Activated T-helper 1 cell treated with anti-CD3 and anti-CD28 coated beads, Interleukin-12 subunit alpha, Interleukin-12 subunit beta, Interleukin-2, Interleukin-4 antibody, amounts not matched to agents 30 ng/mL and 10 ng/mL and 1 ng/mL, durations not matched to agents 14 hours and 24 hours and 36 hours (primary cell): ENCODE measurements at regions of chr15 and their contacts with region 1.

Region 1: GRCh38 chr15:58182460-58183163 is 44.4 kb downstream of the AQP9 start:
- DNase-seq: no peak
- H3K4me3 Mint-ChIP-seq: no peak overlapping the region
- H3K27ac Mint-ChIP-seq: no peak overlapping the region
- H3K4me1 Mint-ChIP-seq: peaks cover 11% of the 10 kb centered on the region
- H3K27me3 Mint-ChIP-seq: peaks cover 24% of the 10 kb centered on the region

Region 2: DNA sequence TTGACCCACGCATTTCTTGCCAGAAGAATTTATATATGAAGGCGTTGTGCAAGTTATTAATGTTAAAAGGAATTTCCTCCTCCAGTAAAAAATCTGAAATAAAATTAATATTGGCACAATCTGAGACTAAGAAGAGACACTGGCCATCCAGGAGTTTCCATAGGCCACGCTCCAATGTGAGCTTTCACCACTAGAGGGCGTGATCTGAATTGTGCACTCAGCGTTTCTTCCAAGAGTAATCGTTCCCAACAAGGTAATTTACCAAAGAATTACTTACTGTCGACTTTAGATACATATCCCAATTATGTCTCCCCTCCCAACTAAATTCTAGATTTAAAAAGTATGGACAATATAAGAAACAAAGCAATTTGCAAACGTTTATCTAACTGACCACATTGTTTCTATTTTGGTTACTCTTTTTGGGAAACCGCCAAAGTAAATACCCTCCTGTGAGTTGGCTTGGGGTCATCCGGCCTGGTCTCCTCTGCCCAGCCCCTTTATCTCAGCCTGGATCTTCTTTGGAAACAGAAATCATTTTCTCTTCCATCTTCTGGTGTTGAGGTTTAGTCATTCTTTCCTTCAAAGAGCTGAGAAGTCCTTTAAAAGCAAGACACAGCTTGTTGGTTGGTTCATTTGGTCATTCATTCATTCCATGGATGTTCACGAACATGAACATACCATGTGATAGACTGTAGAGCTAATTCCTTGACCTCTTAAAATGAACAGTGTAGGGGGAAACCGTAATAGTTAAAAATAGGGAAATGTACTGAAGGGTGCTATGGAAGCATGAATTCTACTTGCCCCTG is 449.9 kb before region 1 on chr15:
- intact Hi-C with region 1: loop called (anchors 5 kb)
- DNase-seq: peak; percentile 26
- H3K4me3 Mint-ChIP-seq: no peak overlapping the region
- H3K27ac Mint-ChIP-seq: no peak overlapping the region
- H3K4me1 Mint-ChIP-seq: peaks cover 10% of the 10 kb centered on the region
- H3K27me3 Mint-ChIP-seq: peaks cover 8% of the 10 kb centered on the region

Region 3: DNA sequence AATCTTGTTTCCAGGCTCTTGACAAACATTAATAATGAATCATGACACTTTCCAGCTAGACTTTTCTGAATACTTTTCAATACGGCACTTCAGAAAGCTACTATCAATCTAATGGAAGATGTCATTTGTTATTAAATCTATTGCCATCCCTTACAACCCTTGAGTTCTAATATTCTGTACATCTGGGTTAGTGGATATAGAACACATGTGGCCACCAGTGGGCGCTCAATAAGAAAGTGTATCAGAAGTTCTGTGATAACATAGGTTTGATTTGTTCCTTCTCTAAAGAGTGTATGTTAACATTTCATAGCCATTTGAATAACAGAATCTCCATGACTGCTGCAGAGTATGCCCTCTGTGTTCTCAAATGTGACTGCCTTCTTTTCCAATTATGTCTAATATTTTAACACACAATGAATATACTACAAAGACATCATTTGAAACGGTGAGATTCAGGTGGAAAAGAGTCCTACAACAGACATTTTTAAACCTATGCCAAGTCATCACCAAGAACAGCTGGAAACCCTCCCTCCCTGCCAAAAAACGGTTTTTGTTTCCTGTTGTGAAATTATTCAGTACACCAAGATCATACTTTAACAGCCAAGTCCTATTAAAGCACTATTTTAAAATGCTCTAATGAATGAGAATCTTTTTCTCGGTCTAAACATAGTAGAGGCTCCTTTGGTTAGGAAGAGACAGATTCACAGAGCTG is 139.3 kb before region 1 on chr15:
- intact Hi-C with region 1: loop called (anchors 1 kb)
- DNase-seq: no peak
- H3K4me3 Mint-ChIP-seq: no peak overlapping the region
- H3K27ac Mint-ChIP-seq: no peak overlapping the region
- H3K4me1 Mint-ChIP-seq: no peaks in the 10 kb centered on the region
- H3K27me3 Mint-ChIP-seq: peaks cover 24% of the 10 kb centered on the region

Region 4: DNA sequence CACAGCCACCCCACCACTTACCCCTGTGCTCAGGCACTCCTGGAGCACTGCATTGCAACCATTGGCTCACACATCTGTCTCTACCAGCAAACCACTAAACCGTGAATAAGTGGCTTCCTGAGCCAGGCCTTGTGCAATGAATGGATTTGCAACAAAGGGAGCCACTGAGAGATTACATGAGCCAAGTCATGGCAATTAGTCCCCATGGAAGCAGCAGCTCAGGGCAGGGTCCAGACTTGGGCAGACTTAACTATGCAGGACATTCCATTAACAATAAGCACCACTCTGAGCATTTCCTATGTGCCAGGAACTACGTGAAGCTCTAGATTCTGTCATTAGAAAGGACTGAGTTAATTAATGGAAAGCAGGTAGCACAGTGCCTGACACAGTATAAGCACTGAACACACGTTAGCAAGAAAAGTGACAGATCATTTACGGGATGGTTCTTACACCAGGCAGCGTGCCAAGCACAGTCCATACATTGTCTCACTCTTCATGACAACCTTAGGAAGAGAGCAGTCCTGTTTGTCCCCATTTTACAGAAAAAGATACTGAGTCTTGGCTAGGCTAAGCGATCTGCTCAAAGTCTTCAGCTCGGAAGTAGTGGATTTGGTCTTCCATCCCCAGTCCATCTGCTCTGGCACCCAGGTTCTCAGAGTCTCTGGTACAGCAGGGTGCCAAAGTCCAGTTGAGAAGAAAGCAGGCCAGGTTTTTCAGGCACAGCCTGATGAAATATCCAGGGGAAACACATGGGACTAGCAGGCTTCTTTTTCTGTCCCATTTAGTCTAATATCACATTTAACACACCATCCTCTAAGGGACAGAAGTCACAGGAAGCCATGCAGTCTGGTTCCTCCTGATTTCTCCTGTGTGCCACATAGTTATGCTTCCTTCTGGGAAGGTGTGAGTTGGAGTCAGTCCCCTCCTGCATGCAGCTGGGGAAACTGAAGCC is 293.2 kb after region 1 on chr15:
- intact Hi-C with region 1: no loop called
- DNase-seq: no peak
- H3K4me3 Mint-ChIP-seq: peak overlapping the region; percentile 48
- H3K27ac Mint-ChIP-seq: peak overlapping the region; percentile 87
- H3K4me1 Mint-ChIP-seq: peaks cover 69% of the 10 kb centered on the region
- H3K27me3 Mint-ChIP-seq: no peaks in the 10 kb centered on the region